ENCODE measurements at regions of chr12 and their contacts with region 1.

Region 1: GRCh38 chr12:286531-287300 is 24.1 kb upstream of the SLC6A13 start:
- DNase-seq: peak; percentile 16
- H3K4me3 Mint-ChIP-seq: no peak overlapping the region
- H3K27ac Mint-ChIP-seq: peak overlapping the region; percentile 77
- H3K4me1 Mint-ChIP-seq: peaks cover 50% of the 10 kb centered on the region
- H3K27me3 Mint-ChIP-seq: no peaks in the 10 kb centered on the region

Region 2: GRCh38 chr12:273382-273781 is 13.3 kb before region 1 on chr12:
- CTCF ChIA-PET with region 1: interaction called, 3 read pairs
- intact Hi-C with region 1: loop called (anchors 2 kb)
- DNase-seq: no peak
- H3K4me3 Mint-ChIP-seq: no peak overlapping the region
- H3K27ac Mint-ChIP-seq: no peak overlapping the region
- H3K4me1 Mint-ChIP-seq: no peaks in the 10 kb centered on the region
- H3K27me3 Mint-ChIP-seq: no peaks in the 10 kb centered on the region

Region 3: DNA sequence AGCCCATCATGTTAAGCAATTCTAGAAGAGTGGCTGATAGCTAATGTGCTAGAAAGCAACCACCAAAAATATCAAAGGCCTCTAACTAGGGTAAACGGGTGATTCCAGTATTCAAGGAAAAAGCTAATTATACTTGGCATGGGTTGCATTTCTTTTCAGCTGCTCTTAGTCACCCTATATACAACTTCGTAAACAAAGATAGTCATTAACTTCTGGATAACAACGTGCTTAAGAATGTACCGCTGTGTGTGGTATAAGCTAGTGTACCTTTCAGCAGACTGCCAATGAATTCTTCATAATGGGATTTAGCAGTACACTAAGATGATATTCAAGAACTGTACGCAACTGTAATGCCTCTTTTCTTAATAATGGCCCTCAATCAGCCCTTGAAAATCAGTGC is 18.1 kb after region 1 on chr12:
- CTCF ChIA-PET with region 1: interaction called, 3 read pairs
- intact Hi-C with region 1: loop called (anchors 1 kb)
- DNase-seq: no peak
- H3K4me3 Mint-ChIP-seq: no peak overlapping the region
- H3K27ac Mint-ChIP-seq: no peak overlapping the region
- H3K4me1 Mint-ChIP-seq: peaks cover 37% of the 10 kb centered on the region
- H3K27me3 Mint-ChIP-seq: no peaks in the 10 kb centered on the region

Region 4: DNA sequence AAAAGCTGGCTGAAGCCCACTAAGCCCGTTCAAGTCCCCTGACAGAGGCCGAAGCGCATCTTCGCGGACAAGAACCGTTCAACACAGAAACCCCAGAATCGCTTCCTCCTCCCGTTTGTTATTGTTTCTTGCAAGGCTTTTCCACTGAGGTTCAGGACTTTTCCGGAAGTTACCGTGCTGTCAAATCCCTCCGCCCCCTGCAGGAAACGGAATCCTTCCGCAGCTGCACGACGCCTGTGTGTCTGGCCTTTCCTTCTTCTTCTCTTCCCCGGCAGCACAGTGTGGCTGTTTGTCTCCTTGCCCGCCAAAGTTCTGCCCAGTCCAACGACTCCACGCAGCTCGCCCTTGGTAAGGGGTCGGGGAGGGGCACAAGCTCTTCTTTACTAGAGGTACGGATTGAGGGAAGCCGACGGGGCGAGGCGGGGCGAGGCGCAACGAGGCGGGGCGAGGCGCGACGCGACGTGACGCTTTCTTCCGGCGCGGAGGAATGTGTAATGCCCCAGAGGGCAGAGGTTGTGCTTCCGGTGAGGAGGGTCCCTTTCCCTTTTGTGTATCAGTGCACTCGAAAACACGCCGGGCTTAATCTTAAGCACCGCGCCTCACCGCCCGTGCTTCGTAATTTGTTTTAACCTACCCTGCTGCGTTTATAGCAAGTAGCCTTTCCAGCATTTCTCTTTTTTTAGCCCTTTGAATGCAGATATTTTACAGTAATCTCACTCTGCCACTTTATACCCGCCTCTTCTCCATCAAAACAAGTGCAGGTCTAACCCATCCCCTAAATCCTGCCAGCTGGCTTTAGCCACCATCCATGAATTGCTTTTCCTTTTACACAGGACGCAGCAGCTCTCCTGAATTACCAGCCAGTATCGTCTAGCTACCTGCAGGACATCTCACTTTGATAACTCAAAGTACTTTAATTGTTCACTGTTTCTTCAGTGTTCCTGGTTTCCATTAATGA is 102.7 kb after region 1 on chr12 and contains the start of gene KDM5A:
- CTCF ChIA-PET with region 1: no interaction called
- intact Hi-C with region 1: loop called (anchors 2 kb)
- DNase-seq: peak; percentile 94
- H3K4me3 Mint-ChIP-seq: peak within 1 kb of the TSS; percentile 96
- H3K27ac Mint-ChIP-seq: peak within 1 kb of the TSS; percentile 98
- H3K4me1 Mint-ChIP-seq: peaks cover 37% of the 10 kb centered on the region
- H3K27me3 Mint-ChIP-seq: no peaks in the 10 kb centered on the region
- total RNA-seq, gene KDM5A: 59.0 to 61.3 TPM

Region 5: DNA sequence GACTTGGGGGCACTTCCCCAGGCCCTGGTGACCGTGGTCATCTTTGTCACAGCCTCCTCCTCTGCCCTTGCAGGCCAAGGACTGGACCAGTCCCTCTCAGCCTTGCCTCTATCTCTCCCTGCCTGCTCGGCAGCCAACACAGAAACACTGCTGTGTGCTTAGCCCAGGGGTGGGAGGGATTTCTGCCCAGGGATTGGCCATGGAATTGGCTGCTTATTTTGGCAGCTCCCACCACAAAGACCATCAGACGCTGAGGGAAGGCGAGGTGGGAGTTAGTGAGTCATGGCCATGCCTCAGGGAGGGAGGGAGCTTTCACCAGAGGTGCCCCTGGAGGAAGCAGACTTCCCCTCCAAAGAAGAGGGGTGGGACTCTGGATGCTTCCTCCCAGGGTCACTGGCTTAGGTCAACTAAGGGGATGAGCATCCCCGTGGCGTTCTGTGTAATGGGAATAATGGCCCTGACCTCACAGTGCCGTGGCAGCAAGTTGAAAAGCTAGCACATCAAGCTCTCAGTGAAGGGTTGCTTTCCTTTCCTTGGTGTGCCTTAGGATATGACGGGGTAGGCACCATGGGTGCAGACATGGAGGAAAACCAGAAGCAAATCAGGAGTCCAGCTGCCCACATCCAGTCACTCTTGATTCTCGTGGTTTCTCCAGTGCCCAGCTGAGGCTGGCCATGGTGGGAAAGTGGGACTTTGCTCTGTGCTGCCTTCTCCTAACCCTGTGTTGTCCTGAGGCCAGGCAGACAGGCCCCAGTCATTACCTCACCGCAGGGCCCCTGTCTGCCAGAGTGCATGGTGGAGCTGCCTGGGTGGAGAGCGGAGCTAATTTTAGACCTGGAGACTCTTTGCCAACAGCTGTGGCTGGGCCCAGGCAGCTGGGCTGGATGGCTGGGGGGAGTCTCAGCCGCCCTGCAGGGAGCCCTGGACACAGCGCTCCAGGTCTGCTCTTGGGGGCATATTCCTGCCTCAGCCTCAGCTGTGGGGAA is 194.4 kb after region 1 on chr12:
- CTCF ChIA-PET with region 1: no interaction called
- intact Hi-C with region 1: no loop called
- DNase-seq: no peak
- H3K4me3 Mint-ChIP-seq: no peak overlapping the region
- H3K27ac Mint-ChIP-seq: no peak overlapping the region
- H3K4me1 Mint-ChIP-seq: no peaks in the 10 kb centered on the region
- H3K27me3 Mint-ChIP-seq: peaks cover 4% of the 10 kb centered on the region

Region 6: GRCh38 chr12:848173-848865 is 561.6 kb after region 1 on chr12:
- CTCF ChIA-PET with region 1: no interaction called
- intact Hi-C with region 1: loop called (anchors 2 kb)
- DNase-seq: no peak
- H3K4me3 Mint-ChIP-seq: no peak overlapping the region
- H3K27ac Mint-ChIP-seq: peak overlapping the region; percentile 77
- H3K4me1 Mint-ChIP-seq: peaks cover 50% of the 10 kb centered on the region
- H3K27me3 Mint-ChIP-seq: no peaks in the 10 kb centered on the region